A549 (cell line): ENCODE measurements at regions of chr10 and their contacts with region 1.

Region 1: GRCh38 chr10:100481462-100482081 is 18.8 kb downstream of the WNT8B start:
- DNase-seq: peak; percentile 89 to 92
- ATAC-seq: peak; percentile 94 to 97
- H3K4me3 ChIP-seq: peak overlapping the region; percentile 44
- H3K27ac ChIP-seq: no peak overlapping the region
- H3K4me1 ChIP-seq: 0 out of 3 replicates have a peak, but pooled peaks cover 3% of the 10 kb centered on the region
- CTCF ChIP-seq: no peak
- EP300 ChIP-seq: no peak
- POLR2A ChIP-seq: no peak
- RAD21 ChIP-seq: no peak

Region 2: GRCh38 chr10:100311307-100311706 is 170.3 kb before region 1 on chr10:
- CTCF ChIA-PET with region 1: interaction called, 11 read pairs
- POLR2A ChIA-PET with region 1: no interaction called
- DNase-seq: peak in 1 of 2 experiments; percentile 20
- ATAC-seq: peak; percentile 38 to 60; a peak in 4 of 6 replicates
- H3K4me3 ChIP-seq: no peak overlapping the region
- H3K27ac ChIP-seq: peak overlapping the region in 1 of 2 experiments; percentile 44; a peak in 3 of 6 replicates
- H3K4me1 ChIP-seq: peaks cover 26% of the 10 kb centered on the region
- CTCF ChIP-seq: no peak
- EP300 ChIP-seq: no peak
- POLR2A ChIP-seq: no peak
- RAD21 ChIP-seq: no peak

Region 3: GRCh38 chr10:100438674-100439315 is 42.8 kb before region 1 on chr10:
- CTCF ChIA-PET with region 1: interaction called, 40 read pairs
- POLR2A ChIA-PET with region 1: no interaction called
- DNase-seq: no peak
- ATAC-seq: no peak
- H3K4me3 ChIP-seq: no peak overlapping the region
- H3K27ac ChIP-seq: no peak overlapping the region
- H3K4me1 ChIP-seq: no peaks in the 10 kb centered on the region
- CTCF ChIP-seq: no peak
- EP300 ChIP-seq: no peak
- POLR2A ChIP-seq: no peak
- RAD21 ChIP-seq: no peak

Region 4: DNA sequence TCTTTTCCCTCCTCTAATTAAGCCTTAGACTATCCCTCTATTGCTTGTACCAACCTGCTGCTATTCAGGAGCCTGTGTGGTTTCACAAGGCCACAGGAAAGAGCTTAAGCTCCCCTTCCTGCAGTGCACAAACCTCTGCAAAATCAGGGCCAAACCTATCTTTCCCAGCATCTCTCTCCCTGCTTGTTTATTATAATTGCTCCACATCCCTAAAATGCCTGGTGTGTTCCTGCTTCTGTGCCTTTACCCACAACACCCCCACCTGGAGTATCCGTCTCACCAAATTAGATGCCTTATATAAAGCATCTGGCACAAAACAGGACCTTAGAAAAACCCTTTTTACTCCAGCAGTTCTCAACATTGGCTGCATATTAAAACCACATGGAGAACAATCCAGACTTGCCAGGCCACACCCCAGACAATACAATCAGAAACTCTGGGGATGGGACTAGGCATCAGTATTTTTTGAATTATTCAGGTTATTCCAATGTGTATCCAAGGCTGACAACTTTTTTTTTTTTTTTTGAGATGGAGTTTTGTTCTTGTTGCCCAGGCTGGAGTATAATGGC is 21.4 kb after region 1 on chr10:
- CTCF ChIA-PET with region 1: interaction called, 381 read pairs
- POLR2A ChIA-PET with region 1: no interaction called
- DNase-seq: no peak
- ATAC-seq: no peak
- H3K4me3 ChIP-seq: no peak overlapping the region
- H3K27ac ChIP-seq: no peak overlapping the region
- H3K4me1 ChIP-seq: peaks cover 10% of the 10 kb centered on the region; the same call in 2 of the 3 replicates
- CTCF ChIP-seq: no peak
- EP300 ChIP-seq: no peak
- POLR2A ChIP-seq: no peak
- RAD21 ChIP-seq: no peak

Region 5: GRCh38 chr10:100529475-100530298 is 48.1 kb after region 1 on chr10 and contains the start of gene NDUFB8:
- CTCF ChIA-PET with region 1: interaction called, 16 read pairs
- POLR2A ChIA-PET with region 1: no interaction called
- DNase-seq: peak; percentile 87
- ATAC-seq: peak; percentile 90 to 94
- H3K4me3 ChIP-seq: peak within 1 kb of the TSS; percentile 80
- H3K27ac ChIP-seq: peak within 1 kb of the TSS; percentile 85 to 96
- H3K4me1 ChIP-seq: peaks cover 13% of the 10 kb centered on the region; the same call in 2 of the 3 replicates
- CTCF ChIP-seq: no peak
- EP300 ChIP-seq: no peak
- POLR2A ChIP-seq: peak; percentile 83
- RAD21 ChIP-seq: no peak
- polyA plus RNA-seq, gene NDUFB8: 208 and 221 TPM in 2 replicates